ENCODE measurements at regions of chr2 and their contacts with region 1.

Region 1: DNA sequence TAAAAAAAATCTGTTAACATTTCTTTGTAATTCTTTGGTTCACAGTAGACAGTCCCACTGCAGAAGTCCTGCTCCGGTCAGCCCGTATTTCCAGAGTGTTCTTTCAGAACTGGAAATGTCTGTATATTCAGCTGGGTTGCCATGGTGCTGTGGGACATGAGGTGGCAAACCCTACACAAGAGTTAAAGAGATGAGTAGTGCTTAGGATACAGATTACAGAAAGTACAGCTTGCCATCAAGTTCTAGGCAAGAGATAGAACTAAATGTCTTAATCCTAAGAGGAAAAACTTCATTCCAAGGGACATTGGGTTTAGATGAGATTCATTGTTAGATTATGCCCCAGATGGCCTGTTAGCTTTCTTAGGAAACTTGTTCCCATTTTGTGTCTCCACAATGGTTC is 60.1 kb downstream of the FMNL2 start:
- DNase-seq: no peak
- ATAC-seq: no peak
- H3K4me3 ChIP-seq: no peak overlapping the region
- H3K27ac ChIP-seq: no peak overlapping the region
- H3K4me1 ChIP-seq: peaks cover 14% of the 10 kb centered on the region
- H3K27me3 ChIP-seq: no peaks in the 10 kb centered on the region
- CTCF ChIP-seq: no peak

Region 2: DNA sequence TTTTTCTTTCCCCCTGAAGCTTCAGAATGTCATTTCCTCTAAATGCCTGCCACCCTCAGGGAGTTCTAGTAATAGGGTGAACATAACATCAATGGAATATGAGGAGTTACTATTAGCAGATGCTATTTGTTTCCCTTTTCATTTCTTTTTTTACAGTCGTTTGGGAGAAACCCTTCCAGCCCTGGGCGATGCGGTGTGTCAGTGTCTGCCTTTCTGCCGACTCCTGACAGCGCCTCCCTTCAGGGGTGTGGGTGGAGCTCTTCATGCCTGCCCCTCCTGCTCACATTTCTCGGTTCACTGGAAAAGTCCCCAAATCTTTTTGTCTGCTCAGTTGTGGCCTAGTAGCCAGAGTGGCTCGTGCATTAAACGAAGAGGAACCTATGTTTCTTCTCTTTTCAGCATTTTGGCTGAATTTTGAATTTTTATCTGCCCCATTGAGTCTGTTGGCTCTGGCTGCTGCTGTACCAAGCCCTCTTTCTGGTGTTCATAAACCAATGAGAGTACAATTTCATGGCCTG is 12.2 kb after region 1 on chr2:
- CTCF ChIA-PET with region 1: interaction called, 3 read pairs
- POLR2A ChIA-PET with region 1: interaction called, 11 read pairs
- in situ Hi-C with region 1: no loop called
- intact Hi-C with region 1: no loop called
- DNase-seq: no peak
- ATAC-seq: peak; percentile 78
- H3K4me3 ChIP-seq: peak overlapping the region; percentile 26 to 53
- H3K27ac ChIP-seq: peak overlapping the region; percentile 94
- H3K4me1 ChIP-seq: peaks cover 74% of the 10 kb centered on the region
- H3K27me3 ChIP-seq: no peaks in the 10 kb centered on the region
- CTCF ChIP-seq: peak; percentile 12; the same call in 1 of the 2 replicates

Measured in Panc1 (cell line).